ENCODE measurements at regions of chr12 and their contacts with region 1.

Region 1: DNA sequence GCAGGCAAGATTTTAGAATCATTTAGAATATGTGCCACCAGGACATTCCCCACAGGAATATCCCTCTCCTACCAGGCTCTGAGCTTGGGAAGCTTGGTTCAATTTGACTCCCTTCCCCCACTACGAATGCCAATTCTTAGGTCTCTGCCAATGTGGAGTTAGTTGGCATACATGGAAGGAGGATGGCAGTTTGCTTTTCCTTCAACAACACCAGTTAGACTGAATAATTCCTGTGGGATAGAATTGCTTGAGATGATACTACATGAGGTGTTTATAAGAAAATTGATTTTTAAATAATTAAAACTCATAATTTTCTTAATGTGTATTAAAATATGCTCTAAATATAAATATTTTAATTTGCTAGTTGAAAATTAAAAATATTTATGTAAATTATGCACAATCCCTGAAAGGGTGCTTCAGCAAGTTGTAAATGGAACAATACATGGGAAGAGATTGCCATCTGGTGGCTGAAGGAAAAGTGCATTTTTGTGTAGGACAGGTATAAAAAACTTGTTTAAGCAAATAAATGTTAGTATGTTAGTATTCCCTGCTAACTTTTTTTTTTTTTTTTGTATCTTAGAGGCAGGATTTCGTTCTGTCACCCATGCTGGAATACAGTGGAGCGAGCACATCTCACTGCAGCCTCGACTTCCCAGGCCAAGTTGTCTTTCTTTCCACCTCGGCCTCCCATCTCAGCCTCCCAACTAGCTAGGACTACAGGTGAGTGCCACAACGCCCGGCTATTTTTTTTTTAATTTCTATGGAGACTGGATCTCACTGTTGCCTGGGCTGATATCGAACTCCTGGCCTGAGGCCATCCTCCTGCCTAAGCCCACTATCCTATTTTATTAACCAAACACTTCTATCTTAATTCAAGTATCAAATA is 25.8 kb upstream of the STRAP start:
- DNase-seq: peak in 7 of 9 experiments; percentile 15 to 76 (median 43)
- ATAC-seq: peak; percentile 63
- H3K4me3 ChIP-seq: no peak overlapping the region
- H3K4me3 Mint-ChIP-seq: no peak overlapping the region
- H3K27ac ChIP-seq: no peak overlapping the region
- H3K27ac Mint-ChIP-seq: no peak overlapping the region
- H3K4me1 ChIP-seq: no peaks in the 10 kb centered on the region
- H3K4me1 Mint-ChIP-seq: no peaks in the 10 kb centered on the region
- H3K27me3 ChIP-seq: no peaks in the 10 kb centered on the region
- H3K27me3 Mint-ChIP-seq: peaks cover 22% of the 10 kb centered on the region
- CTCF ChIP-seq: peak; percentile 97

Region 2: DNA sequence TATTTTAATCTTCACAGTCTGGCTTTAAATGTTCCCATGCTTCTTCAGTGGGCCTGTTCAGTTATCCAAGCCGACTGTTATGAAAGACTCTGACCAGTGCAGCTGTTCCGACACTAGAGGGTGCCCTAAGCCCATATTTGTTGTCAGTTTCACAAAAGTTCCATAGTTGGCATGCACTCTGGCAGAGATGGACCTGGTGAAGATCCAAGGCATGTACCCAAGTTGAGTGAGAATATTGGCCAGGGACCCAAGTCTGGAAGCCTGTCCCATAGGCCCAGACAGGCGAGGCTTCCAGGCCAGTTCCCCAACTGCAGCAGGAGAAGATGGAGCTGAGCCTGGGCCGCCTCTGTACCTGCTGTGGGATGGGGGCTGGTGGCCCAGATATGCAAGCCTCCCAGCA is 1132.6 kb before region 1 on chr12:
- CTCF ChIA-PET with region 1: no interaction called
- POLR2A ChIA-PET with region 1: no interaction called
- intact Hi-C with region 1: loop called (anchors 5 to 10 kb)
- DNase-seq: peak; percentile 10 to 79 (median 56)
- ATAC-seq: peak; percentile 80
- H3K4me3 ChIP-seq: no peak overlapping the region
- H3K4me3 Mint-ChIP-seq: no peak overlapping the region
- H3K27ac ChIP-seq: no peak overlapping the region
- H3K27ac Mint-ChIP-seq: no peak overlapping the region
- H3K4me1 ChIP-seq: no peaks in the 10 kb centered on the region
- H3K4me1 Mint-ChIP-seq: no peaks in the 10 kb centered on the region
- H3K27me3 ChIP-seq: peaks cover 0 to 2% of the 10 kb centered on the region in 2 experiments
- H3K27me3 Mint-ChIP-seq: peaks cover 12% of the 10 kb centered on the region
- CTCF ChIP-seq: peak; percentile 77

Region 3: GRCh38 chr12:15227004-15227679 is 629.2 kb before region 1 on chr12:
- CTCF ChIA-PET with region 1: no interaction called
- POLR2A ChIA-PET with region 1: no interaction called
- intact Hi-C with region 1: loop called in 1 of 2 experiments (anchors 5 kb)
- DNase-seq: peak in 4 of 9 experiments; percentile 10 to 30 (median 26)
- ATAC-seq: no peak
- H3K4me3 ChIP-seq: no peak overlapping the region
- H3K4me3 Mint-ChIP-seq: no peak overlapping the region
- H3K27ac ChIP-seq: no peak overlapping the region
- H3K27ac Mint-ChIP-seq: no peak overlapping the region
- H3K4me1 ChIP-seq: no peaks in the 10 kb centered on the region
- H3K4me1 Mint-ChIP-seq: peaks cover 3% of the 10 kb centered on the region
- H3K27me3 ChIP-seq: peaks cover 0 to 3% of the 10 kb centered on the region in 2 experiments
- H3K27me3 Mint-ChIP-seq: peaks cover 36% of the 10 kb centered on the region
- CTCF ChIP-seq: peak; percentile 51

Region 4: DNA sequence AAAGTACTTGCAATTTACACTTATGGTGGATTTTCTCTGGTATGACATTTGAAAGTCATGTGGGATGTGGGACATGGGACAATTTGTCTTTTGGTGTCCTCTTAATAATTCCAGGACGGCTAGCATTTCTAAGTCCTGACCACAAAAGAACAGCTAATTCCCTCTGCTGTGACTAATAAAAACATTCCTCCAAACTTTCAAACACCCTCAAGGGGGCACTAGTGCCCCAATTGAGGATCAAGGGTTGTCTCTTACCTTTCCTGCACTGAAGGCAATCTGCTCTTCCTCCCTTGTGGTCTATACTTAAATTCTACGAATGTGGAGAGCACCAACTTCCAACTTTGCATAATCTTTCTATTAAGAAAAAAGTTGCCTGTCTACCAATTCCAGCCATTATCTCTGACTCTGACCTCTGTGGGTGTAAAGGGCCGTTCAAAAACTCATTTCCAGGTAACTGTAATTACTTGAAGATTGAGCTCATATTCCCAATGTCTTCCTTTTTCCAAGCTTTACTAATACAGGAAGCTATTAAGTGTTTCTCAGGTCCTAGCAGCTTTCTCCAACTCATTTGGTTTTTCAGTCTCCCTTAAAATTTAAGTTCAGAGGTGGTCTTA is 323.9 kb before region 1 on chr12:
- CTCF ChIA-PET with region 1: interaction called, 18 read pairs
- POLR2A ChIA-PET with region 1: no interaction called
- intact Hi-C with region 1: loop called (anchors 1 kb)
- DNase-seq: peak; percentile 15 to 72 (median 37)
- ATAC-seq: peak; percentile 55
- H3K4me3 ChIP-seq: no peak overlapping the region
- H3K4me3 Mint-ChIP-seq: no peak overlapping the region
- H3K27ac ChIP-seq: no peak overlapping the region
- H3K27ac Mint-ChIP-seq: no peak overlapping the region
- H3K4me1 ChIP-seq: peaks cover 25% of the 10 kb centered on the region
- H3K4me1 Mint-ChIP-seq: peaks cover 18% of the 10 kb centered on the region
- H3K27me3 ChIP-seq: no peaks in the 10 kb centered on the region
- H3K27me3 Mint-ChIP-seq: no peaks in the 10 kb centered on the region
- CTCF ChIP-seq: peak; percentile 70

Region 5: GRCh38 chr12:15590180-15590826 is 266.0 kb before region 1 on chr12:
- CTCF ChIA-PET with region 1: interaction called, 80 read pairs
- POLR2A ChIA-PET with region 1: no interaction called
- intact Hi-C with region 1: loop called (anchors 1 kb)
- DNase-seq: peak; percentile 2 to 79 (median 34)
- ATAC-seq: peak; percentile 99
- H3K4me3 ChIP-seq: peak overlapping the region; percentile 15 to 39
- H3K4me3 Mint-ChIP-seq: peak overlapping the region; percentile 80
- H3K27ac ChIP-seq: no peak overlapping the region
- H3K27ac Mint-ChIP-seq: peak overlapping the region; percentile 77
- H3K4me1 ChIP-seq: no peaks in the 10 kb centered on the region
- H3K4me1 Mint-ChIP-seq: peaks cover 9% of the 10 kb centered on the region
- H3K27me3 ChIP-seq: peaks cover 0 to 4% of the 10 kb centered on the region in 2 experiments
- H3K27me3 Mint-ChIP-seq: no peaks in the 10 kb centered on the region
- CTCF ChIP-seq: peak; percentile 88

Region 6: DNA sequence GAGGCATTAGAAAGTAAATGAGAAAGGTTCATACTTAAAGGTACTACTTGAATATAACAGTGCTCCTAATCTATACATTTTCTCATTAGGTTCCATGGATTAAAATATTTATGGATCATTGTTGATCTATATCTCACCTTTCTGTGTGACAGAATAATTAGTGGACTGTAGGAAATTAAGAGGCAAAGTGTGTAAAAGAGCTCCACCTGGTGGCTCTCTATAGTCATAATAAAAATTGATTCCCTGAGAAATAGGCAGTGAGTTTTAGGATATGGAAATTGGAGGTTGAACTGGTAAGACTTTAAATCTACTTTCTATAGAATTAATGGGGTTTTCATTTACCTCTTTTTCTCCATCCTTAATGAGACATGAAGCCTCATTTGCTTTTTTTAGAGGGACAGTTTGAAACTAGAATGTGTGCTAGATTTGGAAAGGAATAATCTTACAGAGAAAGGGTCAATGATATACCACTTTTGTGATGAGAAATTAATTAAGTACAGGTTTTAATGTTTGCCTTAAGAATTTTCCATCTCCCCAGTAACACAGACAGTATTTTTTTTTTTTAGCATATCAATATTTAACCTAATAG is 43.0 kb after region 1 on chr12:
- CTCF ChIA-PET with region 1: interaction called, 6 read pairs
- POLR2A ChIA-PET with region 1: no interaction called
- intact Hi-C with region 1: loop called in 1 of 2 experiments (anchors 2 kb)
- DNase-seq: peak in 2 of 9 experiments; percentile 46 to 62
- ATAC-seq: peak; percentile 44
- H3K4me3 ChIP-seq: no peak overlapping the region
- H3K4me3 Mint-ChIP-seq: no peak overlapping the region
- H3K27ac ChIP-seq: no peak overlapping the region
- H3K27ac Mint-ChIP-seq: peak overlapping the region; percentile 74
- H3K4me1 ChIP-seq: no peaks in the 10 kb centered on the region
- H3K4me1 Mint-ChIP-seq: peaks cover 6% of the 10 kb centered on the region
- H3K27me3 ChIP-seq: no peaks in the 10 kb centered on the region
- H3K27me3 Mint-ChIP-seq: no peaks in the 10 kb centered on the region
- CTCF ChIP-seq: peak; percentile 94

Region 7: GRCh38 chr12:16062611-16063010 is 206.3 kb after region 1 on chr12:
- CTCF ChIA-PET with region 1: no interaction called
- POLR2A ChIA-PET with region 1: no interaction called
- intact Hi-C with region 1: no loop called
- DNase-seq: no peak
- ATAC-seq: no peak
- H3K4me3 ChIP-seq: no peak overlapping the region
- H3K4me3 Mint-ChIP-seq: no peak overlapping the region
- H3K27ac ChIP-seq: no peak overlapping the region
- H3K27ac Mint-ChIP-seq: no peak overlapping the region
- H3K4me1 ChIP-seq: no peaks in the 10 kb centered on the region
- H3K4me1 Mint-ChIP-seq: no peaks in the 10 kb centered on the region
- H3K27me3 ChIP-seq: no peaks in the 10 kb centered on the region
- H3K27me3 Mint-ChIP-seq: peaks cover 4% of the 10 kb centered on the region
- CTCF ChIP-seq: no peak

Measured in CD8-positive, alpha-beta T cell (primary cell).